A673 (cell line): ENCODE measurements at regions of chr19 and their contacts with region 1.

Region 1: GRCh38 chr19:13366529-13367143 is 139.6 kb downstream of the CACNA1A start:
- DNase-seq: peak; percentile 71
- H3K4me3 ChIP-seq: no peak overlapping the region
- H3K27ac ChIP-seq: no peak overlapping the region
- H3K4me1 ChIP-seq: no peaks in the 10 kb centered on the region
- H3K27me3 ChIP-seq: no peaks in the 10 kb centered on the region
- CTCF ChIP-seq: peak; percentile 72

Region 2: GRCh38 chr19:13069415-13070359 is 296.9 kb before region 1 on chr19:
- CTCF ChIA-PET with region 1: no interaction called
- POLR2A ChIA-PET with region 1: no interaction called
- intact Hi-C with region 1: no loop called
- DNase-seq: no peak
- H3K4me3 ChIP-seq: no peak overlapping the region
- H3K27ac ChIP-seq: no peak overlapping the region
- H3K4me1 ChIP-seq: no peaks in the 10 kb centered on the region
- H3K27me3 ChIP-seq: no peaks in the 10 kb centered on the region
- CTCF ChIP-seq: no peak

Region 3: GRCh38 chr19:13430790-13431582 is 64.3 kb after region 1 on chr19:
- CTCF ChIA-PET with region 1: no interaction called
- POLR2A ChIA-PET with region 1: no interaction called
- intact Hi-C with region 1: loop called (anchors 1 kb)
- DNase-seq: peak; percentile 62
- H3K4me3 ChIP-seq: no peak overlapping the region
- H3K27ac ChIP-seq: no peak overlapping the region
- H3K4me1 ChIP-seq: no peaks in the 10 kb centered on the region
- H3K27me3 ChIP-seq: no peaks in the 10 kb centered on the region
- CTCF ChIP-seq: peak; percentile 72

Region 4: GRCh38 chr19:13588957-13589833 is 222.6 kb after region 1 on chr19:
- CTCF ChIA-PET with region 1: no interaction called
- POLR2A ChIA-PET with region 1: no interaction called
- intact Hi-C with region 1: loop called (anchors 1 kb)
- DNase-seq: peak; percentile 85
- H3K4me3 ChIP-seq: no peak overlapping the region
- H3K27ac ChIP-seq: no peak overlapping the region
- H3K4me1 ChIP-seq: no peaks in the 10 kb centered on the region
- H3K27me3 ChIP-seq: no peaks in the 10 kb centered on the region
- CTCF ChIP-seq: peak; percentile 97